Prostate gland (tissue), 2 donors: ENCODE measurements at regions of chr13 and their contacts with region 1.

Region 1: DNA sequence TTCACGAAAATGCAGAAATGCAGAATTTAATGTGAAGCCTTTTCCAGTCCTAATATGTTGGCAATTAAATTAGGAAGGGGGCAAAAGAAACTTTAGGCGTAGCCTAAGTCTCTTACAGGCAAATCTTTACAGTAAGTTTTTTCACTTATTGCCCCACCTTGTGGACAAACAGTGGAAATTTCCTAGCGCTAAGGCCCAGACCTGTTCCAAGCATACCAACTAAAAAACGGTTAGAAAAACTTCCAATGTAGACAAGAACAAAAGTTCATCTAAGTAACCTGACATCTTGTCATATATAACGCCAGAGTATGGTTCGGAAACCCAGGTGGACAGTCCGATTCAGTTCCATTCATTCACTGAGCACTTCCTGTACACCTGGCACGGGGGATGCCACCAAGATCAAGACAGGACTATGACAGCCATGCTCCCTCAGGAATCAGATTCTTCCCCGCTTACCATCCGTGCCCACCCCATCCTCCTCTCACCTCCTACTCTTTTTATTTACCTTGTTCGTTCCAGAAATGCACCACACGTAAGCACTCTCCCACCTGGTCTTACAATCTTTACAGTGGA is 4.9 kb downstream of the ZAR1L start:
- DNase-seq: no peak
- H3K4me3 ChIP-seq: no peak overlapping the region
- H3K27ac ChIP-seq: no peak overlapping the region
- H3K4me1 ChIP-seq: no peaks in the 10 kb centered on the region
- H3K27me3 ChIP-seq: no peaks in the 10 kb centered on the region
- CTCF ChIP-seq: peak; percentile 62 to 77 (median 73)
- POLR2A ChIP-seq: no peak

Region 2: GRCh38 chr13:32023698-32024097 is 286.5 kb before region 1 on chr13:
- intact Hi-C with region 1: loop called (anchors 2 kb)
- DNase-seq: no peak
- H3K4me3 ChIP-seq: no peak overlapping the region
- H3K27ac ChIP-seq: no peak overlapping the region
- H3K4me1 ChIP-seq: no peaks in the 10 kb centered on the region
- H3K27me3 ChIP-seq: no peaks in the 10 kb centered on the region
- CTCF ChIP-seq: no peak
- POLR2A ChIP-seq: no peak